ENCODE measurements at regions of chr1 and their contacts with region 1.

Region 1: DNA sequence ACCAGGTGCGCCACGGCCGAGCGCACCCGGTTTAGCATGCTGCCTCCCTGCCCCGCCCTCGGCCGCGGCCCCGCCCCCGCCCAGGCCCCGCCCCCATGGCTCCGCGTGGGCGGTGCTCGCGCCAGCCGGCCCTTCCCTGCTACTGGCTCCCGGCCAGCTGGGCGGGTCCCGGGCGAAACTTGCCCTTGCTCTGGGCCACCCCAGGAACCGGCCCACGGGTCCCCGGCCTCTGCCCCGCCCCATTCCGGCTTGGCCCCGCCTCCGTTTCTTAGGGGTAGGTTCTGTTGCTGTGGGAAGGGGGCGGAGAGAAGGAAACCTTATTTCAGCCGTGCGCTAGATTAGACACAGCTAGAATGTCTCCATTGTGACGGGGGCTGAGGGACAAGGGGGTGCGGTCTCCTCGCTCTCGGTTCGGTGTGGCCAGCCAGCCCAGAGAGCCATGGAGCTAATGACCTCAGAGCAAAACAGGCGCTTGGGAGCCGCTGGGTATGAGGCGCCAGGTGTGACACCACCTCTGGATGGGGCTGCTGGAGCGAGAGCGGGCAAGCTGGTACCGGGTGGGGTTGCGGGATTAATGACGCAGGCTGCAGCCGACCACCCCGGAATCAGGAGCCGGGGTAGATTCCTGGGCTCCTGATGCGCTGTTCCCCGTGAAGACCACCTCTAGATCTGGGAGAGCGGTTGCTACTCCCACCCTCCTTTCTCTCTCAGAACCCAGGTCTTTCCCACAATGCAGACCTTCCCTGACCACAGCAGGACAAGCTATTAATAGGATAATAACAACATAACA is at the start of gene PPM1J:
- DNase-seq: peak; percentile 98
- H3K4me3 ChIP-seq: peak within 1 kb of the TSS; percentile 39 to 70
- H3K27ac ChIP-seq: peak within 1 kb of the TSS; percentile 77 to 79
- H3K4me1 ChIP-seq: peaks cover 0 to 13% of the 10 kb centered on the region in 2 donors
- H3K27me3 ChIP-seq: no peaks in the 10 kb centered on the region
- CTCF ChIP-seq: no peak
- POLR2A ChIP-seq: peak; percentile 26 to 71
- total RNA-seq, gene PPM1J: 0.90 to 4.2 (median 2.6) TPM in 3 of 4 donors, not detected in the other

Region 2: DNA sequence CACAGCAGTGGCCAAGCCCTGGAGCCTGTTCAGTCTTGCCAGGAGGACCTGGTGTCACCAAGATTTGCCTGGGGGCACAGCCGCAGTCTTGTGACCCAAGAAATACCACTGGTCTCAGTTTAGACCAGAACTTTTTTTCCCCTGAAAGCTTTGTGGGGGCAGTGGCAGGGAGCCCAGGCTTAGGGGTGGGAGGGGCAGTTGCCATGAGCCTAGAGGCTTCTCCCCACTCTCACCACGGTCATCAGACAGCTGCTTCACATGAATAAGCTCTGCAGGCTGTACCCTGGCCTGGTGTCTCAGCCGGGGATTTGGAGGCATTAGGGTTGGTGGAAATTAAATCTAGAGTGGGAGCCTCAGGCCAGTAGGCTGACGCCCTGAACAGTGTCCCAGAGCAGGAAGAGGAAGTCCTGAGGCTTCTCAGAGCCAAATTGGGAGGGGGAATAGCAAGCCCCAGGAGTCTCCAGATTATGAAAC is 166.8 kb after region 1 on chr1:
- intact Hi-C with region 1: no loop called
- DNase-seq: peak in 1 of 2 donors; percentile 19
- H3K4me3 ChIP-seq: no peak overlapping the region
- H3K27ac ChIP-seq: peak overlapping the region; percentile 40 to 71
- H3K4me1 ChIP-seq: no peaks in the 10 kb centered on the region
- H3K27me3 ChIP-seq: no peaks in the 10 kb centered on the region
- CTCF ChIP-seq: no peak
- POLR2A ChIP-seq: no peak

Region 3: GRCh38 chr1:112904071-112904830 is 188.8 kb after region 1 on chr1:
- intact Hi-C with region 1: no loop called
- DNase-seq: peak in 1 of 2 donors; percentile 31
- H3K4me3 ChIP-seq: no peak overlapping the region
- H3K27ac ChIP-seq: peak overlapping the region; percentile 63 to 76
- H3K4me1 ChIP-seq: peaks cover 0 to 6% of the 10 kb centered on the region in 2 donors
- H3K27me3 ChIP-seq: no peaks in the 10 kb centered on the region
- CTCF ChIP-seq: no peak
- POLR2A ChIP-seq: no peak

Region 4: DNA sequence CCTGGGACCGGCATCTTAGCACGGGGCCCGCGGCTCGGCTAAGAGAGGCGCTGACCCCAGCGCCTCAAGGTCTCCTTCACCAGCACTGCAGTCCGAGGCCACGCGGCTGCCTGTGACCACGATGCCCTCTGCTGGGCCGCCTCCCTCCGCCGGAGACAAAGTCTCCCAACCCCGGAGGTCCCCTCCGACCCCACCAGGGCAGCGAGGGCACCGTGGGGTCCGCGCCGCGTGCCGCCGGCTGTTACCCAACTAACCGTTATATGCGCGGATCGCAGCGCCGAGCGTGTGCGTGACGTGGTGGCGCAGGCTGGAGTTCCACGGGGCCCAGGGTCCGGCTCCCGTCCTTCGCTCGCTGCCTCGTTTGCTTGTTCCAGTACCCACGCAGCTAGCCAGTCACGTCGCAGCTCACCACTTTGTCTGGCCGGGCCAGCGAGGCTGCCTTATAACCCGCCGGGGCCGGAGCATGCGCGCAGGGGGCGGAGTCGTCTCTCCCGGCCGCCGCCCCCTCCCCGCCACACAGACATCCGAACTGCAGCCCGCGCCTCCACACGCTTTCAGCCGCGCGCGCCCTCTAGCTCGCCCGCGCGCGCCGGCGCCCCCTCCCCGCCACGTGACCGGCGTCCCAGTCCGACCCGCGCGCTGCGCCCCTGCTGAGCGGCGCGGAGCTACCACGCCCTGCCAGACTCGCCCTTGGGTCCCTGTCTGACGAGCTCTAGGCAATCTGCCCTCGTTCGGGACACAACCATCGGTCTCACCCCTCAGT is 240.5 kb after region 1 on chr1 and contains the start of gene SLC16A1:
- intact Hi-C with region 1: loop called (anchors 5 kb)
- DNase-seq: peak; percentile 93 to 94
- H3K4me3 ChIP-seq: peak within 1 kb of the TSS; percentile 85 to 89
- H3K27ac ChIP-seq: peak within 1 kb of the TSS; percentile 93 to 96
- H3K4me1 ChIP-seq: no peaks in the 10 kb centered on the region
- H3K27me3 ChIP-seq: no peaks in the 10 kb centered on the region
- CTCF ChIP-seq: peak in 3 of 4 experiments; percentile 25 to 42 (median 37)
- POLR2A ChIP-seq: peak; percentile 96 to 98
- total RNA-seq, gene SLC16A1: 12.6 to 76.3 (median 39.5) TPM

Region 5: DNA sequence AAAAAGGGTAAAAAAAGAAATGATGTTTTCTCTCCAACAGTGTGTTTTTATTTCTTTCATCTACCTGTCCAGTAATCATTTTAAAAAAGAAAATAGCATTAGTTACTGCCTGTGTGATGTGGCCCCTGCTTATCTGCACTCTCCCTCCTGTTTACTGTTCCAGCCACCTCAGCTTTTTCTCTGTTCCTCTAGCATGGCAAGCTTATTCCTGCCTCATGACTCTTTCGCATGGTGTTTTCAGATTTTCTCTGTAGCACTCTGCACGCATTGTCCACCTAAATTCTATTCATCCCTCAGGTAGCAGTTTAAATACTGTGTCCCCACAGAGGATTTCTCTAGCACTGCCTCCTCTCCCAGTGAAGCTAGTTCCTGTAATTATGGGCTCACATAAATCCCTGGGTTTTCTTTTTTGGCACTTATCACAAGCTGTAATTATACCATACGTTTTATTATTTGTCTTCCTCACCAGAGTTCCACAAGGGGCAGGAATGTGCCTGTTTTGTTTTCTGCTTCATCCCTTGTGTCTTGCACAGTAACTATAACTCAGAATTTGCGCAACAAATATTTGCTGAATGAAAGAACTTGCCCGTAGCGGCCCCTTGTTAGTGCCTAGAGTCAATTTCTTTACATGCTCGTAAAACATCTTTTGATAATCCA is 306.1 kb after region 1 on chr1:
- intact Hi-C with region 1: no loop called
- DNase-seq: peak in 1 of 2 donors; percentile 27
- H3K4me3 ChIP-seq: no peak overlapping the region
- H3K27ac ChIP-seq: peak overlapping the region; percentile 78 to 89
- H3K4me1 ChIP-seq: no peaks in the 10 kb centered on the region
- H3K27me3 ChIP-seq: no peaks in the 10 kb centered on the region
- CTCF ChIP-seq: peak in 1 of 4 experiments; percentile 30
- POLR2A ChIP-seq: no peak

Measured in uterus (tissue), 4 donors.